ENCODE measurements at regions of chr15 and their contacts with region 1.

Region 1: DNA sequence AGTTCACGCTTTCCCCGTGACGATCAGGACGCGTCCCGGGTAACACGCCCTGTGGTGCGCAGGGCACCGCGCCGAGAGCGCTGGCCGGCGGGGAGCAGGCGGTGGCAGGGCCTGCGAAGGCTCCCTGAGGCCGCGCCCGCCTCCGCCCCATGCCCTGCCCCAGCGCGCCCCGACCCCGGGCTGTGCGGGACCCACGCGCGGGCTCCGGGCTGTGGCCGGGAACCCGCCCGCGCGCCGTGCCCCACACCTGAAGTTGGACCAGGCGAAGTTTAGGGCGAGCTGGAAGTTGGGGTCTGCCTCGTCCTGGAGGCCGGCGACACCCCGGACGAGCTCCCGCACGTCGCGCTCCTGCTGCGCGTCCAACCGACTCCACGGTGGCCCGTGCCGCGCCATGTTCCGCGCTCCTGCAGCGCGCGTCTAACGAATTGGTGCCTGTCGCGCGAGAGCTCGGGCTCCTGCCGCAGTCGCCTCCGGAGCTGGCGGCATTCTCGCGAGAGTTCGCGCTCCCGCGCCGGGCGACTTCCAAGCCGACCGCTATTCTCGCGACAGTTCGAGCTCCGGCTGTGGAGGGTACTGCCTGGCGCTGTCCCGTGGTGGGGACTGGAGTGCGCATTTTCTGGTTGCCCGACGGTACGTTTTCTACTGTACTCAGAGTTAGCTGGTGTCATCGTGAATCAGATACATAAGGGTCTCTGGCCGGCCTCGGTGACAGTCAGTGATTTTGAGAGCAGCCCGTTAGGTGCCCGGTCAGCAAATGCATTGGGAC is at the start of gene TUBGCP5:
- DNase-seq: peak; percentile 99
- ATAC-seq: peak; percentile 97
- H3K4me3 Mint-ChIP-seq: peak within 1 kb of the TSS; percentile 81
- H3K27ac Mint-ChIP-seq: peak within 1 kb of the TSS; percentile 91
- H3K4me1 Mint-ChIP-seq: peaks cover 13% of the 10 kb centered on the region
- H3K27me3 Mint-ChIP-seq: no peaks in the 10 kb centered on the region
- total RNA-seq, gene TUBGCP5: 16.2 to 16.4 TPM

Region 2: GRCh38 chr15:22786868-22787698 is 252.3 kb before region 1 on chr15:
- CTCF ChIA-PET with region 1: no interaction called
- POLR2A ChIA-PET with region 1: no interaction called
- intact Hi-C with region 1: loop called in 1 of 2 experiments (anchors 2 kb)
- DNase-seq: peak; percentile 43
- ATAC-seq: peak; percentile 20
- H3K4me3 Mint-ChIP-seq: peak overlapping the region; percentile 83
- H3K27ac Mint-ChIP-seq: peak overlapping the region; percentile 80
- H3K4me1 Mint-ChIP-seq: peaks cover 35% of the 10 kb centered on the region
- H3K27me3 Mint-ChIP-seq: no peaks in the 10 kb centered on the region

Region 3: DNA sequence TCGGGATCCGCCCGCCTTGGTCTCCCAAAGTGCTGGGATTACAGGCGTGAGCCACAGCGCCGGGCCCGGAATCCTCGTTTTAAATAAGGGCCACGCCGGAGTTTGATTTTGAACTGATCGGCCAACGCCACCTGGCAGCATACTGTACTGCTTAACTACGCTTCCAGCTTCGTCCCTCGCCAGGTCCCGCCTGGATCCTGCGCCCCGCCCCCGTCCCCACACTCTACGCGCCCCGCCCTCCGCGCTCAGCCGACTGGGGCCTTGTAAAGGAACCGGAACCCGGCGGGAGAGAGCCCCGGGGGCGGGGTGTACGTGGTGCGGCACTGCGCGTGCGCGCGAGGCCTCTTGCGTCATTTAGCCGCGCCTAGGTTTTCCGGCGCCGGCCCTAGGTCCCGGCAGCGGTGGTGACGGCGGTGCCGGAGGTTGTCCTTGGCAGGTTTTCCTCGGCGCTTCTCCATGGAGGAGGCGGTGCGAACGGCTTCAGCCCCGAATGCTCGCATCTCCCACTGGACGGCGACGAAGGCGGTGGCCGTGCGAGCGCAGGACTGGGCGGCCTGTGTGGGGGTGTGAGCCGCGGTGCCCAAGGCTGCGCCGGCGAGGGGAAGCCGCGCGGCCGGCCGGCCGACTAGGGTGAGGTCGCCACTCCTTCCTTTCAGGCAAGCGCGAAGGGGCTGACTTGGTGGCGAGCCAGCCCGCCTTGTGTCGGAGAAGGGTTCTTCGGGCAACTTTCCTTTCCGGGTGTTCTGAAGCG is 200.9 kb before region 1 on chr15 and contains the start of gene NIPA2:
- CTCF ChIA-PET with region 1: no interaction called
- POLR2A ChIA-PET with region 1: no interaction called
- intact Hi-C with region 1: loop called (anchors 1 kb)
- DNase-seq: peak; percentile 99
- ATAC-seq: peak; percentile 96
- H3K4me3 Mint-ChIP-seq: peak within 1 kb of the TSS; percentile 96
- H3K27ac Mint-ChIP-seq: peak within 1 kb of the TSS; percentile 98
- H3K4me1 Mint-ChIP-seq: peaks cover 29% of the 10 kb centered on the region
- H3K27me3 Mint-ChIP-seq: no peaks in the 10 kb centered on the region
- total RNA-seq, gene NIPA2: 42.6 to 61.4 TPM

Region 4: GRCh38 chr15:22980189-22981050 is 58.9 kb before region 1 on chr15 and contains the start of gene CYFIP1:
- CTCF ChIA-PET with region 1: interaction called, 4 read pairs
- POLR2A ChIA-PET with region 1: interaction called, 3 read pairs
- intact Hi-C with region 1: loop called (anchors 1 to 5 kb)
- DNase-seq: peak; percentile 50
- ATAC-seq: peak; percentile 61
- H3K4me3 Mint-ChIP-seq: peak within 1 kb of the TSS; percentile 84
- H3K27ac Mint-ChIP-seq: peak within 1 kb of the TSS; percentile 59
- H3K4me1 Mint-ChIP-seq: peaks cover 8% of the 10 kb centered on the region
- H3K27me3 Mint-ChIP-seq: peaks cover 9% of the 10 kb centered on the region
- total RNA-seq, gene CYFIP1: 31.1 to 32.8 TPM

Region 5: GRCh38 chr15:23026218-23026617 is 13.1 kb before region 1 on chr15:
- CTCF ChIA-PET with region 1: interaction called, 11 read pairs
- POLR2A ChIA-PET with region 1: no interaction called
- intact Hi-C with region 1: no loop called
- DNase-seq: no peak
- ATAC-seq: no peak
- H3K4me3 Mint-ChIP-seq: no peak overlapping the region
- H3K27ac Mint-ChIP-seq: no peak overlapping the region
- H3K4me1 Mint-ChIP-seq: no peaks in the 10 kb centered on the region
- H3K27me3 Mint-ChIP-seq: no peaks in the 10 kb centered on the region

Region 6: DNA sequence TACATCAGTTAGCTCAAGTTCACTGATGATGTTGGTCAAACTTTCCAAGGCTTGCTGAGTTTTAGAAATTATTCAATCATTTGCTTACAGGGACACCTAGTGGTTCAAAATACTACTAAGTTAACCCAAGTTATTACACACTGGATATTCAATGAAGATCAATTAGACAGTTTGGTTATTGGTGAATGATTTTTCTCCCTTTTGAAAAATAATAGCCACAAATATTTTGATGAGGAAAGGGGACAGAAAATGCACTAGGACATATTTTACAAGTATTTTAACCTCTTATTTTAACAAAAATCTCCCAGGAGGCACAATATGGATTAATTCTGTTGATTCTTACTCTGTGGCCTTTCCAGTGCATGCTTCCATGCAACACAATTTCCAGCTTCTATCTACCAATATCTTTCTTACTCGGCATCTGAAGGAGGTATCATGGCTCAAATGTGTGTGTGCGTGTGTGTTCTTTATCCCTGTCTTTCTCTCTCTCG is 427.8 kb after region 1 on chr15:
- CTCF ChIA-PET with region 1: no interaction called
- POLR2A ChIA-PET with region 1: no interaction called
- intact Hi-C with region 1: loop called in 1 of 2 experiments (anchors 10 kb)
- DNase-seq: no peak
- ATAC-seq: no peak
- H3K4me3 Mint-ChIP-seq: no peak overlapping the region
- H3K27ac Mint-ChIP-seq: no peak overlapping the region
- H3K4me1 Mint-ChIP-seq: no peaks in the 10 kb centered on the region
- H3K27me3 Mint-ChIP-seq: peaks cover 6% of the 10 kb centered on the region